ENCODE measurements at regions of chr6 and their contacts with region 1.

Region 1: GRCh38 chr6:36187446-36187845 is 9.1 kb upstream of the BRPF3 start:
- DNase-seq: no peak
- ATAC-seq: no peak
- H3K4me3 ChIP-seq: no peak overlapping the region
- H3K27ac ChIP-seq: no peak overlapping the region
- H3K4me1 ChIP-seq: no peaks in the 10 kb centered on the region
- H3K27me3 ChIP-seq: peaks cover 2% of the 10 kb centered on the region
- CTCF ChIP-seq: no peak
- POLR2A ChIP-seq: no peak
- RAD21 ChIP-seq: no peak

Region 2: GRCh38 chr6:35842381-35842780 is 345.1 kb before region 1 on chr6:
- CTCF ChIA-PET with region 1: no interaction called
- POLR2A ChIA-PET with region 1: no interaction called
- dilution Hi-C with region 1: no loop called
- in situ Hi-C with region 1: no loop called
- intact Hi-C with region 1: no loop called
- DNase-seq: no peak
- ATAC-seq: no peak
- H3K4me3 ChIP-seq: no peak overlapping the region
- H3K27ac ChIP-seq: no peak overlapping the region
- H3K4me1 ChIP-seq: no peaks in the 10 kb centered on the region
- H3K27me3 ChIP-seq: no peaks in the 10 kb centered on the region
- CTCF ChIP-seq: no peak
- POLR2A ChIP-seq: no peak
- RAD21 ChIP-seq: no peak

Region 3: GRCh38 chr6:36150283-36150682 is 37.2 kb before region 1 on chr6:
- CTCF ChIA-PET with region 1: no interaction called
- POLR2A ChIA-PET with region 1: no interaction called
- dilution Hi-C with region 1: no loop called
- in situ Hi-C with region 1: no loop called
- intact Hi-C with region 1: loop called (anchors 1 kb)
- DNase-seq: no peak
- ATAC-seq: no peak
- H3K4me3 ChIP-seq: no peak overlapping the region
- H3K27ac ChIP-seq: no peak overlapping the region
- H3K4me1 ChIP-seq: no peaks in the 10 kb centered on the region
- H3K27me3 ChIP-seq: peaks cover 8% of the 10 kb centered on the region
- CTCF ChIP-seq: no peak
- POLR2A ChIP-seq: no peak
- RAD21 ChIP-seq: no peak

Region 4: DNA sequence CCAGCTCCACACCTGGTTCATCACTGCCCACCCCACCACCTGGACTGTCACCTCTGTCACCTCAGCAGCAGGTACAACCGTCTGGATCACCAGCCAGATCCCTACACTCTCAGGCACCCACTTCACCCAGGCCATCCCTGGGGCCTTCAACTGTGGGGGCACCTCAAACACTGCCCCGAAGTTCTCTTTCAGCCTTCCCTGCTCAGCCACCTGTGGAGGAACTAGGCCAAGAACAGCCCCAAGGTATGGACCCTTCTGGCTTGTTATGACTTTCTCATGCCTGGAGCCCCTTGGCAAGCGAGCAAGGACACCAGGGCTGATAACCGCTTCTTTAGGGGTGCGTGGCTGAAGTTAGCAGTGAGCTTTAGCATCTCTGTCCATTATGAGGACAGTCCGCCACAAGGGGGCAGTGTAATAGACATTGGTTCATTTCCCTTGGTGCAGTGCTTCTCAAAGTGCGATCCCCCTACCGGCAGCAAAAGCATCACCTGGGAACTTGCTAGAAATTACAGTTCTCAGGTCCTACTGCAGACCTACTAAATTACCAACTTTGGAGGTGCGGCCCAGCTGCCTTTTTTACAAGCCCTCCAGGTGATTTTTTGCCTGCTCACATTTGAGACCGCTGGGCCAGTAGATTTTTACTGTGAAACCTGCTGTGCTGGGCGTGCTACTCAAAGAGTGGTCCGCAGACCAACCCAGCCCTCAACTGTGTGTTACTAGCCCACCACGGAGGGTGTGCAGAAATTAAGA is 115.0 kb after region 1 on chr6:
- CTCF ChIA-PET with region 1: no interaction called
- POLR2A ChIA-PET with region 1: no interaction called
- dilution Hi-C with region 1: no loop called
- in situ Hi-C with region 1: no loop called
- intact Hi-C with region 1: no loop called
- DNase-seq: peak; percentile 86
- ATAC-seq: peak; percentile 85
- H3K4me3 ChIP-seq: no peak overlapping the region
- H3K27ac ChIP-seq: no peak overlapping the region
- H3K4me1 ChIP-seq: peaks cover 4% of the 10 kb centered on the region
- H3K27me3 ChIP-seq: peaks cover 15% of the 10 kb centered on the region
- CTCF ChIP-seq: peak; percentile 98
- POLR2A ChIP-seq: no peak
- RAD21 ChIP-seq: peak; percentile 74